HEK293 (cell line): ENCODE measurements at regions of chr6 and their contacts with region 1.

Region 1: GRCh38 chr6:75893058-75893775 is 144.2 kb downstream of the MYO6 start:
- H3K4me3 ChIP-seq: no peak overlapping the region
- H3K27ac ChIP-seq: no peak overlapping the region
- H3K4me1 ChIP-seq: no peaks in the 10 kb centered on the region
- CTCF ChIP-seq: peak; percentile 39; the same call in 1 of the 2 replicates

Region 2: GRCh38 chr6:75802366-75802765 is 90.9 kb before region 1 on chr6:
- CTCF ChIA-PET with region 1: no interaction called
- POLR2A ChIA-PET with region 1: no interaction called
- H3K4me3 ChIP-seq: no peak overlapping the region
- H3K27ac ChIP-seq: no peak overlapping the region
- H3K4me1 ChIP-seq: peaks cover 6% of the 10 kb centered on the region
- CTCF ChIP-seq: no peak

Region 3: DNA sequence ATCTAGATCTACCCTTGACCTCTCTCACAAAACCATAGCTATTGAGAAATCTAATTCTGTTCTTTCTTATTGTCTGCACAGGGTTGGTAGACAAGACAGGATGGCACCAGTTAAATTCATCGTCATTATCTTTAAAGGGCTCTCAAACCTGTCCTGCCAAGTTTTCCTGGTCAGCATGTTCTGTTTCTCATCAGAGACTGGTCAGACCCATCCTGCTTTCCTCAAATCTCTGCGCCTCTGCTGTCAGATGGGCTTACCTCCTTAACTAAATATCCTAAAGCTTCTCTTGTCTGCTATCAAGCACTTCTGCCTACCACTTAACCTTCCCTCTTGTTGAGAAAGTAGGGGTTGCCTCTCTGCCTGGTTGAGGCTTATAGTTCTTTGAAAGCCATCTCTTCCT is 19.0 kb before region 1 on chr6:
- CTCF ChIA-PET with region 1: interaction called, 74 read pairs
- POLR2A ChIA-PET with region 1: interaction called, 4 read pairs
- H3K4me3 ChIP-seq: no peak overlapping the region
- H3K27ac ChIP-seq: no peak overlapping the region
- H3K4me1 ChIP-seq: no peaks in the 10 kb centered on the region
- CTCF ChIP-seq: no peak

Region 4: GRCh38 chr6:75906871-75907270 is 13.7 kb after region 1 on chr6:
- CTCF ChIA-PET with region 1: interaction called, 53 read pairs
- POLR2A ChIA-PET with region 1: no interaction called
- H3K4me3 ChIP-seq: no peak overlapping the region
- H3K27ac ChIP-seq: no peak overlapping the region
- H3K4me1 ChIP-seq: no peaks in the 10 kb centered on the region
- CTCF ChIP-seq: no peak

Region 5: DNA sequence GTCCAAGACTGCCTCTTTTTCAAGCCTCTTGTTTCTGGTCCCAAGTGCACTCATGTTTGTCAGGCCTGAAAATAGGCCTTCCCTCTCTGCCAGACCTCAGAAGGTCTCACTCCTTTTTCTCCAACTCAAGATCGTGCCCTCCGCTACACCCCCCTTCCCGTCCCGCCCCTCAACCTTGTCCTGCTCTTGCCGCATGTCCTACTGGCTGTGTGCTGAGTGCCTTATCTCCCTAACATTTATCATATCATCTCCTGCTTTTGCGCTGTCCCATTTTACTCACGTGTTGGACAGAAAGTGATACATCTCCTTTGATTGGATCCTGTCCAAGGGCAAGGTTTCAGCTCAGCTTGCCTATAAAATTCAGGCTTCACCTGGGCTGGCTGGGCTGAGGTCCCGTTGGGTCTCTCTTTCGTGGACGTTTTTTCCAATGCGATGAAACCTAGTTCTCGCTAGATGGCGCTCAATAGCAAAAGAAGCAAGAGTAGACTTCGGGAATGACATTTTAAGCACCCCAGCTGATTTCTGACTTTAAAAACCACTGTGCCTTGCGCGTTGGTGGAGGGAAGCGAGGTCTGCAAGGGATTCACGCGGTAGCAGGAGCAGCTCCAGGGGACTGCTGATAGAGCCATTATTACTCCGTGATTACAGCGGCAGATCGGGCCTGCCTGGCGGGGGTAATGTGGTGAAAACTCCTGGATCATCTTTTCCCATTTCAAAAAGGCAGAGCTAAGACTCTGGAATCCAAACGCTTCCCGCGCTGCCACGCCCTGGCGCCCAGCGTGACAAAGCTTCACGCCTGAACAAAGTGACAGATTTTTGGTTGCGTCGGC is 41.6 kb after region 1 on chr6:
- CTCF ChIA-PET with region 1: interaction called, 99 read pairs
- POLR2A ChIA-PET with region 1: no interaction called
- H3K4me3 ChIP-seq: peak overlapping the region; percentile 41
- H3K27ac ChIP-seq: no peak overlapping the region
- H3K4me1 ChIP-seq: no peaks in the 10 kb centered on the region
- CTCF ChIP-seq: peak; percentile 65; the same call in 1 of the 2 replicates

Region 6: GRCh38 chr6:76861403-76861802 is 968.2 kb after region 1 on chr6:
- CTCF ChIA-PET with region 1: interaction called, 16 read pairs
- POLR2A ChIA-PET with region 1: no interaction called
- H3K4me3 ChIP-seq: no peak overlapping the region
- H3K27ac ChIP-seq: no peak overlapping the region
- H3K4me1 ChIP-seq: no peaks in the 10 kb centered on the region
- CTCF ChIP-seq: no peak